Gastrocnemius medialis (tissue), 4 donors: ENCODE measurements at regions of chr7 and their contacts with region 1.

Region 1: DNA sequence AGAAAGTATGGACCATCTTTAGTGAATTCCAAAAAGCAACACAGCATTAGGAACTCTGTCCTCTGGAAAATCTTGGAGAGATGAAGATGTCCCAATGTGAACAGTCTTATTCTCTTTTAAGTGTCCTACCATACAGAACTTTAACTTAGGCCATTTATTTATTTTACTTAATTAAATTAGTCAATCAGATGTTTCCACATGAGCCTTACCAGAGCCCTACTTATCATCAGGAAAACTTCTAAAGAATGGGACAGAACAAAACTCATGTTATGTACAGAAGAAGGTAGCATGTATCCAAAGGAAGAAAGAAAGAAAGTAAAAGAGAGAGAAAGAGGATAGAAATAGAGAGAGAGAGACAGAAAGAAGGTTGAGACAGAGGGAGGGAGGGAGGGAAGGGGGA is 276.4 kb downstream of the ETV1 start:
- DNase-seq: no peak
- ATAC-seq: no peak
- H3K4me3 ChIP-seq: no peak overlapping the region
- H3K27ac ChIP-seq: no peak overlapping the region
- H3K4me1 ChIP-seq: no peaks in the 10 kb centered on the region
- H3K27me3 ChIP-seq: no peaks in the 10 kb centered on the region
- CTCF ChIP-seq: no peak
- POLR2A ChIP-seq: no peak

Region 2: GRCh38 chr7:12630513-12630819 is 1082.6 kb before region 1 on chr7:
- in situ Hi-C with region 1: no loop called
- intact Hi-C with region 1: loop called (anchors 5 kb)
- DNase-seq: no peak
- ATAC-seq: no peak
- H3K4me3 ChIP-seq: no peak overlapping the region
- H3K27ac ChIP-seq: no peak overlapping the region
- H3K4me1 ChIP-seq: no peaks in the 10 kb centered on the region
- H3K27me3 ChIP-seq: no peaks in the 10 kb centered on the region
- CTCF ChIP-seq: no peak
- POLR2A ChIP-seq: no peak

Region 3: GRCh38 chr7:13778967-13779366 is 65.9 kb after region 1 on chr7:
- in situ Hi-C with region 1: no loop called
- intact Hi-C with region 1: no loop called
- DNase-seq: no peak
- ATAC-seq: no peak
- H3K4me3 ChIP-seq: no peak overlapping the region
- H3K27ac ChIP-seq: no peak overlapping the region
- H3K4me1 ChIP-seq: no peaks in the 10 kb centered on the region
- H3K27me3 ChIP-seq: no peaks in the 10 kb centered on the region
- CTCF ChIP-seq: no peak
- POLR2A ChIP-seq: no peak

Region 4: GRCh38 chr7:14055813-14056212 is 342.7 kb after region 1 on chr7:
- in situ Hi-C with region 1: no loop called
- intact Hi-C with region 1: no loop called
- DNase-seq: no peak
- ATAC-seq: no peak
- H3K4me3 ChIP-seq: no peak overlapping the region
- H3K27ac ChIP-seq: no peak overlapping the region
- H3K4me1 ChIP-seq: no peaks in the 10 kb centered on the region
- H3K27me3 ChIP-seq: no peaks in the 10 kb centered on the region
- CTCF ChIP-seq: no peak
- POLR2A ChIP-seq: no peak